IMR-90 (cell line): ENCODE measurements at regions of chr2 and their contacts with region 1.

Region 1: GRCh38 chr2:161308178-161308955 is at the start of gene PSMD14:
- DNase-seq: peak; percentile 94
- ATAC-seq: peak; percentile 97
- H3K4me3 ChIP-seq: peak within 1 kb of the TSS; percentile 86
- H3K27ac ChIP-seq: peak within 1 kb of the TSS; percentile 89
- H3K4me1 ChIP-seq: peaks cover 3% of the 10 kb centered on the region; the same call in 1 of the 2 replicates
- H3K27me3 ChIP-seq: no peaks in the 10 kb centered on the region
- CTCF ChIP-seq: no peak
- POLR2A ChIP-seq: peak; percentile 95
- RAD21 ChIP-seq: no peak
- total RNA-seq, gene PSMD14: 110 and 191 TPM in 2 replicates

Region 2: DNA sequence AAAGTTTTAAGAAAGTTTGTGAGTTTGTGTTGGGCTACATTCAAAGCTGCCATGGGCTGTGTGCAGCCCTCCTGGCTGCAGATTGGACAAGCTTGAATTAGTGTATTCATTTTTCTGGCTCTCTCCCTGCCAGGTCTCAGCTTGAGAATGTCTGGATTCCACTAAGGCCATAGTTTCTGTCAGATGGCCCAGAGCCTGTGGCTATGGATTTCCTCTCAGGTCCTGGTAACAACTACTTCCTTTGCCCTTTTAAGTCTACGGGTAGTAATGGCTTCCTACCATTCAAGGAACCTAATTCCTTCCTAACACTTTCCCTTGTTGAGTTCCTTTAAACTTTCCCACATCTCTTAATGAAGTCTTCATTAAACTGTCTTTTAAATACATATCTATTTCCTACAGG is 24.4 kb before region 1 on chr2:
- CTCF ChIA-PET with region 1: no interaction called
- POLR2A ChIA-PET with region 1: interaction called, 19 read pairs
- dilution Hi-C with region 1: no loop called
- in situ Hi-C with region 1: no loop called
- intact Hi-C with region 1: no loop called
- DNase-seq: no peak
- ATAC-seq: no peak; the same call in 1 of the 2 replicates
- H3K4me3 ChIP-seq: no peak overlapping the region
- H3K27ac ChIP-seq: no peak overlapping the region
- H3K4me1 ChIP-seq: no peaks in the 10 kb centered on the region
- H3K27me3 ChIP-seq: no peaks in the 10 kb centered on the region; the same call in 1 of the 2 replicates
- CTCF ChIP-seq: no peak
- POLR2A ChIP-seq: no peak
- RAD21 ChIP-seq: no peak